ENCODE measurements at regions of chr1 and their contacts with region 1.

Region 1: GRCh38 chr1:23727362-23727827 is 15.9 kb upstream of the ELOA start:
- DNase-seq: peak; percentile 55
- CTCF ChIP-seq: no peak

Region 2: DNA sequence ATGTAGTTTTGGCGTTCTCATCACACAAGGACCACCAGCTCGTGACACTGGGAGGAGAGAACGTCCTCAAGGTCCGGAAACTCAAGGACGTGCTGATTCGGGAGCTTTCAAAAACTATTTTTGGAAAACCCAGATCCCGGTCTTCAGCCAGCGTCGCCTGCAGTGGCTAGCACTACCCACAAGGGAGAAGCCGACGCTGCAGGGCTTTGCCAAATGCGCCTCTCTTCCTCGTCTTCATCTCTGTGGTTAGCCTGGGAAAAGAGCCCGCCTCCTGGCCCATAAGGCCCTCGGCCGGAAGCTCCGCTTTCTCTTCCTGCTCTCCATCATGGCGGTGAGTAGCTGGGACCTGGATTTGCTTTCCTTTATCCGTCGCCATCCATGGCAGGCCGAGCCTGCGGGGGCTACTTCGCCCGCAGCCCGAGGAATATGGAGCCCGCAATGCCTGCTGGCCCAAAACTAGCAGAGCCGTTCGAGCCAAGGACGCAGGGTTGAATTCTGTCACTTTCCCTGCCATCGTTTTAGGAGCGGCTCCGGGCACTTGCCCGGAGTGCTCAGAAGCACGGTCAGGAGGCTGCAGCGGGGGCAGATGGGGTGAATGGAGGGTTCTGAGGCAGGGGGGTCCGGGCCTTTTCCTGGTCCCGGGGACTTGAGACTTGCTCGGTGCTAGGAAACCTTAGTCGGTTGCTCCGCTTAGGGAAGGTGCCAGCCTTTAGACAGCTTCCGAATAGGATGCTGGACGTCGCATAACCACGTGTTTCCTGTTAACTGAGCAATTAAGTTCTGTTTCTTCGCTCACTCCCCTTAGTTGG is 35.7 kb before region 1 on chr1 and contains the start of gene RPL11:
- CTCF ChIA-PET with region 1: interaction called, 10 read pairs
- POLR2A ChIA-PET with region 1: interaction called, 4 read pairs
- DNase-seq: peak; percentile 95
- CTCF ChIP-seq: peak; percentile 60

Measured in GM10248 (cell line).